Transverse colon (tissue), 4 donors: ENCODE measurements at regions of chr15 and their contacts with region 1.

Region 1: DNA sequence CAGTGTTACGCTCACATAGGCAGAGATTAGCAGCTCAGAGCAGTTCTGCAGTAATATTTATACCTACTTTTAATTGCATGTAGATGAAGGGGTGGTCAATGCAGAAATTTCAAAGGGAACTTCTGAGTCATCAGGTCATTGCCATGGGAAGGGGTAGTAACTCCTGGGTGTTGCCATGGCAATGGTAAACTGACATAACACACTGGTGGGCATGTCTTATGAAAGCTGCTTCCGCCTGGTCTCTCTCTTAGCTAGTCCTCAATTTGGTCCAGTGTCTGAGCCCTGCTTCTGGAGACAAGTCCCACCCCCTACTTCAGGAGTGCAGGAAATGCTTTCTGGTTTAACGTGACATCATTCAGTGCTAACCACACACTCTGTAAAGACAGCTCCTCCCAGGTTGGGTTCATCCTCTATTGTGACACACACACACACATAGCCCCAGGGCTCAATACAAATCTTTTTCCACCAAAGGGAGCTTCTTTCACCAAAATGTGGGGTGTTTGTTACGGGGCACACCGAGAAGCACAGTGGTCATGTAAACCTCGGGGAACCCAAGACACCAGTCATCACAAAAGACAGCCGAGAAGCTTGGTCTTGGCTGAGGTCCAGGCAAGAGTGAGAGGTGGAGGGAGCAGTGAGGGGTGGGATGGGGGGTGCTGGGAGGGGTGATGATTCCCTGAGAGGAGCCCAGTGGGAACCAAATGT is 74.5 kb downstream of the TLE3 start:
- DNase-seq: no peak
- H3K4me3 ChIP-seq: no peak overlapping the region
- H3K27ac ChIP-seq: peak overlapping the region; percentile 28 to 57 (median 50)
- H3K4me1 ChIP-seq: peaks cover 8 to 27% (median 13%) of the 10 kb centered on the region in 4 donors
- H3K27me3 ChIP-seq: no peaks in the 10 kb centered on the region
- CTCF ChIP-seq: no peak
- EP300 ChIP-seq: no peak
- POLR2A ChIP-seq: no peak

Region 2: GRCh38 chr15:70077188-70078147 is 54.3 kb after region 1 on chr15:
- in situ Hi-C with region 1: no loop called
- intact Hi-C with region 1: loop called (anchors 10 kb)
- DNase-seq: no peak
- H3K4me3 ChIP-seq: no peak overlapping the region
- H3K27ac ChIP-seq: peak overlapping the region in 1 of 4 donors; percentile 36
- H3K4me1 ChIP-seq: peaks cover 12 to 34% (median 24%) of the 10 kb centered on the region in 4 donors
- H3K27me3 ChIP-seq: no peaks in the 10 kb centered on the region
- CTCF ChIP-seq: no peak
- EP300 ChIP-seq: no peak
- POLR2A ChIP-seq: no peak